HepG2 (cell line): ENCODE measurements at regions of chr20 and their contacts with region 1.

Region 1: GRCh38 chr20:29763821-29764511 is 1493.5 kb upstream of the DEFB115 start:
- DNase-seq: no peak
- ATAC-seq: peak; percentile 47; the same call in 2 of the 3 replicates
- H3K4me3 ChIP-seq: no peak overlapping the region
- H3K27ac ChIP-seq: no peak overlapping the region
- H3K4me1 ChIP-seq: no peaks in the 10 kb centered on the region
- H3K27me3 ChIP-seq: peaks cover 1 to 8% of the 10 kb centered on the region in 2 experiments; a peak in 2 of 5 replicates
- CTCF ChIP-seq: no peak
- EP300 ChIP-seq: no peak
- POLR2A ChIP-seq: no peak
- RAD21 ChIP-seq: no peak

Region 2: DNA sequence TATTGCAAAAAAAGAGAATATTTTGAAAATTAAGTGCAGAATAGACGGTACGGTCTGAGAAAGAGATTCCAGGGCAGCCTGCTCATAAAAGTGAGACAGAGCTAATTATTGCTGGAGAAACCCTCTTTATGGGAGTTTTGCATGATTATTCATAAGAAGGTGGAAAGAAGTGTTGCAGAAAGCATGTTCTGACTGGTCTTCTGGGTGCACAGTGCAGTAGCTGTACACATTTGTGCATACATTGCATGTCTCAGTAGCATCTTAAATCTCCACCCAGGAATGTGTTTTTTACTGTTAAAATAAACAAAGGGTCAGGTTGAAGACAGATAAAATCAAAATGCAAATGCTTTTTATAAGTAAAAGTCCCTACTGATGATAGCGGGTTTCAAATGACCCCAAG is 320.1 kb before region 1 on chr20:
- CTCF ChIA-PET with region 1: interaction called, 7 read pairs
- POLR2A ChIA-PET with region 1: no interaction called
- in situ Hi-C with region 1: no loop called
- intact Hi-C with region 1: loop called (anchors 2 kb)
- DNase-seq: no peak
- ATAC-seq: no peak
- H3K4me3 ChIP-seq: no peak overlapping the region
- H3K27ac ChIP-seq: no peak overlapping the region
- H3K4me1 ChIP-seq: no peaks in the 10 kb centered on the region
- H3K27me3 ChIP-seq: peaks cover 0 to 1% of the 10 kb centered on the region in 2 experiments; a peak in 1 of 5 replicates
- CTCF ChIP-seq: no peak
- EP300 ChIP-seq: no peak
- POLR2A ChIP-seq: no peak
- RAD21 ChIP-seq: no peak

Region 3: DNA sequence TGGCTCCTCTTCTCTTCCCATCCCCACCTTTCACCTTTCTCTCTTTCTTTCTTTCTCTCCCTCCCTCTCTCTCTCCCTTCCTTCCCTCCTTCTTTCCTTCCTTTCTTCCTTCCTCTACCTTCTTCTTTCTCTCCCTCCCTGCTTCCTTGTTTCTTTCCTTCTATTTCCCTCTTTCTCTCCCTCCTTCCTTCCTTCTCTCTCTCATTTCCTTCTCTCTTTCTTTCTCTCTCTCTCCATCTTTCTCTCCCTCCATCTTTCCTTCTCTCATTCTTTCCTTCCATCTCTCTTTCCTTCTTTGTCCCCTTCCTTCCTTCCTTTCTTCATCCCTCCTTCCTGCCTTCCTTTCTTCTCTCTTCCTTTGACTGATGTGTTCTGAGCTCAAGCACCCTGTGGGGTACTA is 26.5 kb after region 1 on chr20:
- CTCF ChIA-PET with region 1: no interaction called
- POLR2A ChIA-PET with region 1: no interaction called
- in situ Hi-C with region 1: no loop called
- intact Hi-C with region 1: no loop called
- DNase-seq: no peak
- ATAC-seq: no peak
- H3K4me3 ChIP-seq: no peak overlapping the region
- H3K27ac ChIP-seq: no peak overlapping the region
- H3K4me1 ChIP-seq: no peaks in the 10 kb centered on the region
- H3K27me3 ChIP-seq: no peaks in the 10 kb centered on the region
- CTCF ChIP-seq: no peak
- EP300 ChIP-seq: no peak
- POLR2A ChIP-seq: no peak
- RAD21 ChIP-seq: no peak